AG04450 (cell line): ENCODE measurements at regions of chr12 and their contacts with region 1.

Region 1: GRCh38 chr12:47881826-47882427 is 22.9 kb downstream of the VDR start:
- DNase-seq: peak; percentile 96
- H3K4me3 ChIP-seq: 0 out of 2 replicates have a peak overlapping the region, but pooled peaks have one; percentile 2
- H3K27ac ChIP-seq: peak overlapping the region; percentile 96
- H3K27me3 ChIP-seq: no peaks in the 10 kb centered on the region
- CTCF ChIP-seq: no peak

Region 2: GRCh38 chr12:47904713-47905310 is 22.9 kb after region 1 on chr12 and contains the start of gene VDR:
- CTCF ChIA-PET with region 1: interaction called, 4 read pairs
- POLR2A ChIA-PET with region 1: interaction called, 15 read pairs
- DNase-seq: peak; percentile 21
- H3K4me3 ChIP-seq: peak within 1 kb of the TSS; percentile 79
- H3K27ac ChIP-seq: peak within 1 kb of the TSS; percentile 83
- H3K27me3 ChIP-seq: peaks cover 26% of the 10 kb centered on the region
- CTCF ChIP-seq: peak; percentile 21; the same call in 1 of the 2 replicates
- polyA plus RNA-seq, gene VDR: 11.9 and 13.6 TPM in 2 replicates

Region 3: GRCh38 chr12:47981496-47982260 is 99.8 kb after region 1 on chr12:
- CTCF ChIA-PET with region 1: no interaction called
- POLR2A ChIA-PET with region 1: no interaction called
- DNase-seq: no peak
- H3K4me3 ChIP-seq: no peak overlapping the region
- H3K27ac ChIP-seq: no peak overlapping the region
- H3K27me3 ChIP-seq: peaks cover 20% of the 10 kb centered on the region
- CTCF ChIP-seq: no peak